CD8-positive, alpha-beta memory T cell (primary cell): ENCODE measurements at regions of chr1 and their contacts with region 1.

Region 1: GRCh38 chr1:147541672-147542568 is 619 bp downstream of the BCL9 start:
- DNase-seq: peak in 1 of 5 donors; percentile 51
- H3K4me3 ChIP-seq: peak overlapping the region; percentile 71
- H3K4me3 Mint-ChIP-seq: no peak overlapping the region
- H3K27ac ChIP-seq: no peak overlapping the region
- H3K27ac Mint-ChIP-seq: peak overlapping the region in 5 of 8 donors; percentile 3 to 72 (median 42)
- H3K4me1 ChIP-seq: peaks cover 62% of the 10 kb centered on the region
- H3K4me1 Mint-ChIP-seq: peaks cover 7 to 22% (median 7%) of the 10 kb centered on the region in 3 donors
- H3K27me3 ChIP-seq: no peaks in the 10 kb centered on the region
- H3K27me3 Mint-ChIP-seq: peaks cover 6 to 21% of the 10 kb centered on the region in 2 donors

Region 2: DNA sequence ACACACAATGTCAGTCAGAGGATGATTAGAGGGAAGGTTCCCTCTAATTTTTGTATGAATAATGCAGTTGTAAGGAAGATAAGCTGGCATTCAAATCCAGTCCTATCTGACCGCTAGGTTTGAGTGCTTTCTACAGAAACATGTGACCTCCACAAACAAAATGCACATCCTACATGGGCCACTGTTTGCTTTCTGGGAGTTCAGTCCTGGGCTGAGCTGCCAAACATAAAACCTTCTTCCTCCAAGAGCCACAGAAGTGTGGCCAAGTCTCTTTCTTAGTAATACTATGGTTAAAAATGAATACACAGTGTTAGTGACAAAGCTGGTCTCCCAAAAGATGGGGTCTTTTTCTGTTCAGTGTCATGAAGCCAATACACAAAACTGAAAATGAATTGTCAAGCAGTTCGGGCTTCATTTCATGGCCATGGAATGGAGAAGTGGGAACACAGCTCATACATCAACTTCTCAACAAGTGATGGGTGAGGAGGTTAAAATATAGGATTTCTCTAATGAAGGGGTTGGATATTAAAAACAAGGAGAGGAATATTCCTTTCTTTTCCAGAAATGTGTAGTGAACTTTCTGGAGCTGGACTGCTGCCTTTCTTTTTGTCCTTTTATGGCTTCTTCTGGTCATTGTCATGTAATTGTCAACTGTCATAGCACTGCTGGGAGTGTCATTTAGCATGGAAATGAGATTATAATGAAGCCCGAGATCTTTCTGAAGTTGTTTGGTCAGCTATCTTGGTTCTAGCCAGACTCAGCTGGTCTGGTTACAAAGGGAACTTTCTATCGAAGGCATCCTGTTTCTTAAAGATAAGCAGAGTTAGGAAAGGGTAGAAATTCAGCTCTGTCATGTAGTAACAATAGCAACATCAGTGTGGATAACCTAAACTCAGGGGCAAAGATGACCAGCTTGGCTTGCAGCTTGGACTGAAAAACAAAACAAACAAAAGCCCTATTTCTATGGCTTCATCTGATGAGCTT is 164.4 kb before region 1 on chr1:
- CTCF ChIA-PET with region 1: no interaction called
- POLR2A ChIA-PET with region 1: no interaction called
- DNase-seq: no peak
- H3K4me3 ChIP-seq: no peak overlapping the region
- H3K4me3 Mint-ChIP-seq: no peak overlapping the region
- H3K27ac ChIP-seq: peak overlapping the region; percentile 70
- H3K27ac Mint-ChIP-seq: no peak overlapping the region
- H3K4me1 ChIP-seq: no peaks in the 10 kb centered on the region
- H3K4me1 Mint-ChIP-seq: no peaks in the 10 kb centered on the region
- H3K27me3 ChIP-seq: peaks cover 8% of the 10 kb centered on the region
- H3K27me3 Mint-ChIP-seq: peaks cover 4 to 19% of the 10 kb centered on the region in 2 donors

Region 3: GRCh38 chr1:147599362-147600118 is 57.6 kb after region 1 on chr1:
- CTCF ChIA-PET with region 1: interaction called, 8 read pairs
- POLR2A ChIA-PET with region 1: interaction called, 45 read pairs
- DNase-seq: peak; percentile 93 to 97 (median 96)
- H3K4me3 ChIP-seq: peak overlapping the region; percentile 74
- H3K4me3 Mint-ChIP-seq: peak overlapping the region; percentile 83 to 92 (median 89)
- H3K27ac ChIP-seq: peak overlapping the region; percentile 36
- H3K27ac Mint-ChIP-seq: peak overlapping the region in 5 of 8 donors; percentile 44 to 77 (median 64)
- H3K4me1 ChIP-seq: peaks cover 10% of the 10 kb centered on the region
- H3K4me1 Mint-ChIP-seq: peaks cover 17 to 24% (median 23%) of the 10 kb centered on the region in 3 donors
- H3K27me3 ChIP-seq: no peaks in the 10 kb centered on the region
- H3K27me3 Mint-ChIP-seq: no peaks in the 10 kb centered on the region